ENCODE measurements at regions of chr9 and their contacts with region 1.

Region 1: DNA sequence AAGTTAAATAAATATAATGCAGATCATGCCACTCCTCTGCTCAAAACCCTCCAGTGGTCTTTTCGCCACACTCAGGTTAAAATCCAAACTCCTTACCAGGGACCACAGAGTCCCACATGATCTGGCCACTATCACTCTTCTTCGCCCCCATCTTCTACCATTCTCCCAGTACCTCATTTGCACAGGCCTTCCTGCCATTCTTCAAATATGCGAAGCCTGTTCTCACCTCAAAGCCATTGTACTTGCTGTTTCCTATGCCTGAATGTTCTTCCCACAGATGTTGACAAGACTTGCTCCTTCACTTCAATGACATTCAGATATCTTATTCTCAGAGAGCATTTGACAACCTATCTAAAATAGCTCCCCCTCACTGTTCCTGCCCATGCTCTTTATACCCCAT is 10.9 kb downstream of the TEX10 start:
- DNase-seq: no peak
- H3K4me3 ChIP-seq: no peak overlapping the region
- H3K27ac ChIP-seq: no peak overlapping the region
- H3K4me1 ChIP-seq: no peaks in the 10 kb centered on the region
- H3K27me3 ChIP-seq: no peaks in the 10 kb centered on the region
- CTCF ChIP-seq: no peak

Region 2: DNA sequence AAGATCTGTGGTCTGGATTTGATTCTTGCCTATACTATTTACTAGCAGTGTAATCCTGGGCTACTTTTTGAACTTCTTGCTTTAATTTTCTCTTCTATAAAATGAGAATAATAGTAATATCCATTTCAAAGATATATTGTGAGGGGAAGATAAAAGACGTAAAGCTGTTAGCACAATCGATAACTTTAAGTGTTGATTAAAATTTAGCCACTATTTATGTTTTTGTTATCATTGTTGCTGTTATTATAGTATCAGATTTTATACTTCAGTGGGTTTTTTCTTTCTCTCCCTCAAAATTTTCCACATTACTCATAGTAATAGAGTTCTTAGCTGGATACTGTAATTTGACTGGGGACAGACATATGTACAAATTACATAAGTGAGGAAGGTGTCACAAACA is 393.4 kb before region 1 on chr9:
- CTCF ChIA-PET with region 1: no interaction called
- POLR2A ChIA-PET with region 1: interaction called, 10 read pairs
- intact Hi-C with region 1: no loop called
- DNase-seq: no peak
- H3K4me3 ChIP-seq: no peak overlapping the region
- H3K27ac ChIP-seq: no peak overlapping the region
- H3K4me1 ChIP-seq: no peaks in the 10 kb centered on the region
- H3K27me3 ChIP-seq: no peaks in the 10 kb centered on the region
- CTCF ChIP-seq: no peak

Region 3: DNA sequence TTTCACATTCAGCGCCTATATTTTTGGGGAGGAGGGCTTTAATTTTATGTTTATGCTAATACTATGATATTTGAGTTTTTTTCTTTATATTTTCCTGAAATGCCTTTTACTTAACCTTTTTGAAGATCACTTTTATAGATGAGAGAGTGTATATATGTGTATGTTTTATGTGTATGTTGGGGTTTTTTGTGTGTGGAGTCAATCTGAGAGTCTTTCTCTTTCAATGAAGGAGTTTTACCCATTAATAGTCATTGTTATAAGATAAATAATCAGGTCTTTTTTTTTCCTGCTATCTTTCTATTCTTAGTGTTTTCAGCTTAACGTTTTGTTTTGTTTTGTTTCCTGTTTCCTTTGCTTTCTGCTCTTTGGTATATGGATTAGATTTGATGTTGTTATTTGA is 101.4 kb before region 1 on chr9:
- CTCF ChIA-PET with region 1: no interaction called
- POLR2A ChIA-PET with region 1: interaction called, 19 read pairs
- intact Hi-C with region 1: no loop called
- DNase-seq: no peak
- H3K4me3 ChIP-seq: no peak overlapping the region
- H3K27ac ChIP-seq: no peak overlapping the region
- H3K4me1 ChIP-seq: no peaks in the 10 kb centered on the region
- H3K27me3 ChIP-seq: no peaks in the 10 kb centered on the region
- CTCF ChIP-seq: no peak

Region 4: GRCh38 chr9:100440071-100440847 is 98.4 kb after region 1 on chr9:
- CTCF ChIA-PET with region 1: no interaction called
- POLR2A ChIA-PET with region 1: no interaction called
- intact Hi-C with region 1: no loop called
- DNase-seq: no peak
- H3K4me3 ChIP-seq: no peak overlapping the region
- H3K27ac ChIP-seq: no peak overlapping the region
- H3K4me1 ChIP-seq: no peaks in the 10 kb centered on the region
- H3K27me3 ChIP-seq: no peaks in the 10 kb centered on the region
- CTCF ChIP-seq: no peak